HCT116 (cell line): ENCODE measurements at regions of chr10 and their contacts with region 1.

Region 1: DNA sequence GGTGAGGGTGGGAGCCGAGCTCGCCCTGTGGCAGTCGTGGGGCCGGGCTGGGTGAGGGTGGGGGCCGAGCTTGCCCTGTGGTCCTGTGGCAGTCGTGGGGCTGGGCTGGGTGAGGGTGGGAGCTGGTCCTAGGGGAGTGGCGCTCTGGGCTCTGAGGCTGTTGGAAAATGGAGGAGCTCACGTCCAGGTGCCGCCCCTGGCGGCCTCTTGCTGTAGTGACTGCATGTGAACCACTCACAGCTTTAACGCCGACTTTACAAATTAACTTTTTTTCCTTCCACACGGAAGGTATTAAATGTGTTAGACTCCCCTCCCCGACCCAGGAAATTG is 312.6 kb downstream of the WDR37 start:
- DNase-seq: peak; percentile 45
- ATAC-seq: peak; percentile 99
- H3K4me3 ChIP-seq: no peak overlapping the region
- H3K27ac ChIP-seq: no peak overlapping the region
- H3K4me1 ChIP-seq: no peaks in the 10 kb centered on the region
- H3K27me3 ChIP-seq: peaks cover 16% of the 10 kb centered on the region; the same call in 1 of the 2 replicates
- CTCF ChIP-seq: peak; percentile 25 to 85 (median 70); a peak in 4 of 6 replicates
- POLR2A ChIP-seq: no peak
- RAD21 ChIP-seq: peak; percentile 47

Region 2: DNA sequence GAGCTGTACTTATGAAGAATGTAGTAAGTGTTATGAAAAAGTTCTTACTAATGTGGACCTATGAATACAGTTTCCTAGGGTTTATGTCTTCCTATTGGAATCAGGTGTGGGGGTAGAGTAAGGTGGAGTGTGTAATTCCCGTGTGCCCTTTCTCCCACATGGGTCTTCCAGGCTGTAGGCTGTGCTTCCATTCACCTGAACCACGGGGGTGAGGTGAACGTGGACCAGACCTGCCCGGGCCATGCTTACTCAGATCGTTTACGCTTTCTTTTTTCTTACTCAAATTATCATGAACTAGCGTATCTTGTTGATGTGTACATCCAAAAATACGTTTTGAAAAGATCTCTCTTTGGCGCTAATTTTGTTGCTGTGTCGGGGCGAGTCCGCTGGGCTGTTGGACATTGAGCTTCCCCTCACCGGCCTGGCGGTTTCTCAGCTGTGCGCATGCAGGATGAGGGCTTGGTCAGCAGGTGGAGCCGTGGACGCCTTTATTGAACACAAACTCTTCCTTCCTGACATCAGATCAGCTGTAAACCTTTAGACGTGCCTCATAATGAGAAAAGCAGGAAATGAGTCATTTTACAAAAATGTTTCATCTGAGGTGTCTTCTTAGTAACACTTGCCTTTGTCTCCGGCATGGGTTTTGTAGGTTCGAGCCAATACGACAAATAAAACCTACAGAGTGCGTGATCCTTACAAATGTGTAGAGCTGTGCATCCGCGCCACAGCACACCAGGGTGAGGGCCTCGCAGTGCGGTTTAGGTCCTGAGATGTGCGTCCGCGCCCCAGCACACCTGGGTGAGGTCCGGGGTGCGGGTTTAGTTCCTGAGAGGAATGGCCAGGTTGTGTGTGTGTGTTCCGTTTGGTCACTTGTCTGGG is 258.8 kb before region 1 on chr10:
- CTCF ChIA-PET with region 1: interaction called, 14 read pairs
- POLR2A ChIA-PET with region 1: no interaction called
- RAD21 ChIA-PET with region 1: no interaction called
- intact Hi-C with region 1: loop called (anchors 5 kb)
- DNase-seq: peak; percentile 58
- ATAC-seq: peak; percentile 97
- H3K4me3 ChIP-seq: no peak overlapping the region
- H3K27ac ChIP-seq: peak overlapping the region; percentile 40; the same call in 1 of the 2 replicates
- H3K4me1 ChIP-seq: peaks cover 11 to 18% of the 10 kb centered on the region in 2 experiments
- H3K27me3 ChIP-seq: no peaks in the 10 kb centered on the region
- CTCF ChIP-seq: peak; percentile 41 to 85 (median 85); a peak in 5 of 6 replicates
- POLR2A ChIP-seq: no peak
- RAD21 ChIP-seq: peak; percentile 73

Region 3: GRCh38 chr10:1354809-1355710 is 13.7 kb before region 1 on chr10:
- CTCF ChIA-PET with region 1: interaction called, 15 read pairs
- POLR2A ChIA-PET with region 1: no interaction called
- RAD21 ChIA-PET with region 1: no interaction called
- intact Hi-C with region 1: no loop called
- DNase-seq: no peak
- ATAC-seq: no peak
- H3K4me3 ChIP-seq: no peak overlapping the region
- H3K27ac ChIP-seq: no peak overlapping the region
- H3K4me1 ChIP-seq: no peaks in the 10 kb centered on the region
- H3K27me3 ChIP-seq: peaks cover 31% of the 10 kb centered on the region
- CTCF ChIP-seq: no peak
- POLR2A ChIP-seq: no peak
- RAD21 ChIP-seq: no peak